Endothelial cell of umbilical vein (primary cell): ENCODE measurements at regions of chr19 and their contacts with region 1.

Region 1: DNA sequence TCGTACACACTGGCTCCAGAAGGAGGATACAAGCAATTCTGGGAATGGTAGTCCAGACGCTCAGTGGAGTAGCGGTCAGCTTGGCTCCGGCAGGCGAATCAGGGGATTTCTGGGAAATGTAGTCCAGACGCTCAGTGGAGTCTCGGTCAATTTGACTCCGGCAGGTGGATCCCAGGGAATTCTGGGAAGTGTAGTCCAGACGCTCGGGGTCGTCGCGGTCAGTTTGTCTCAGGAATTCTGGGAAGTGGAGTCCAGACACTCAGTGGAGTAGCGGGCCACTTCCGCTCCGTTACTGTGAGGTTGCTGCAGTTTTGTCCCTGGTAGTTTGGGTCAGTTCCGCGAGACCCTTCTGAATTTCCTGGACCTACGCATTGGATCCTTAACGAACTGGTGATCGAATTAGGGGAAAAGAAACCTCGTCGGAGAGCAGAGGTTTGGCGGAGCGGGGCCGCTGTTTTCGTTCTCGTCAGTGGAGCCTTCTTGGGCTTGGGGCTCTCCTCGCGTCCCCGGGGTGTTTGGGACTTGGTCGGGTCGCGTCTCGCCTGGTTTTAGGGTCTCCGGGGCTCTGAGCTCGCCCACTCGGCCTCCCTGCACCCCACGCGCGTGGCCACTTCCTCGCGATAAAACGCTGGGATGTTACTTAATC is at the start of gene ZNF225:
- DNase-seq: peak; percentile 98
- H3K4me3 ChIP-seq: peak within 1 kb of the TSS; percentile 80 to 94 (median 84)
- H3K27ac ChIP-seq: peak within 1 kb of the TSS; percentile 32
- H3K4me1 ChIP-seq: peaks cover 6% of the 10 kb centered on the region
- H3K27me3 ChIP-seq: no peaks in the 10 kb centered on the region
- CTCF ChIP-seq: no peak
- POLR2A ChIP-seq: peak; percentile 85
- total RNA-seq, gene ZNF225: 3.9 and 4.1 TPM in 2 replicates

Region 2: DNA sequence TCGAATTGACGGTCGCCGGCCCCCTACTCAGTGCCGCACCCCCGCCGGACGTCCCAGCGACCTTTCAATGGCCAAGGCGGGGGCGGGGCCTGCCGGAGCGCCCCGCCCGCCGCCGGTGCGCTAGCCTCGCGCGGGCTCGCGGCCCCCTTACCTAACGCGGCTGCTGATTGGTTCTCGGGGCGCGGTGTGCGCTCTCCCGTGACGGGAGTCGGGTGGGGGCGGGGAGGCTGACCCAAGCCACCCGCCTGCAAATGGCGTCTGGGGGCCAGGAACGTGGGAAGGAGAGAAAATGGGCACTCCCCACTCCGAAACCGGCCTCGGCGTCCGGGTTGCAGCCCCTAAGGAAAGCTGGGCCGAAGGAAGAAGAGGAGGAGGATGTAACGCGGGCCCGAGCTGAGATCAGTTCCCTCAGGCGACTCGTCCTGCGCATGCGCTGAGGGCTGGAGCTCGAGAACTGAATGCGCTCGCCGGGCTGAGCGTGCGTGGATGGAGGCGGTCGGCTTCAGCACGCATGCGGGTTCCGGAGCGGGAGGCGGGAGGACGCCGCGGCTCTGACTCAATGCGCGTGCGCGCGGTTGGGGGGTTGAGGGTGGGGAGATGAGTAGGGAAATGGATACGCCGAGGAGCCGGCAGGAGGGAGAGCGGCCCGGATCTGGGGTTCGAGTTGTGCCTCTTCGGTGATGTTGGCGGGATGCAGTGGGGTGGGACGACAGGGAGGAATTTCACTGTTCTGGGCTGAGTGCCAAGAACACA is 358.6 kb before region 1 on chr19 and contains the start of gene SMG9:
- CTCF ChIA-PET with region 1: no interaction called
- POLR2A ChIA-PET with region 1: no interaction called
- dilution Hi-C with region 1: no loop called
- intact Hi-C with region 1: loop called (anchors 10 kb)
- DNase-seq: peak; percentile 99
- H3K4me3 ChIP-seq: peak within 1 kb of the TSS; percentile 67 to 92 (median 74)
- H3K27ac ChIP-seq: peak within 1 kb of the TSS; percentile 97
- H3K4me1 ChIP-seq: peaks cover 34% of the 10 kb centered on the region
- H3K27me3 ChIP-seq: no peaks in the 10 kb centered on the region
- CTCF ChIP-seq: no peak
- POLR2A ChIP-seq: peak; percentile 50
- total RNA-seq, gene SMG9: 45.0 and 53.3 TPM in 2 replicates

Region 3: DNA sequence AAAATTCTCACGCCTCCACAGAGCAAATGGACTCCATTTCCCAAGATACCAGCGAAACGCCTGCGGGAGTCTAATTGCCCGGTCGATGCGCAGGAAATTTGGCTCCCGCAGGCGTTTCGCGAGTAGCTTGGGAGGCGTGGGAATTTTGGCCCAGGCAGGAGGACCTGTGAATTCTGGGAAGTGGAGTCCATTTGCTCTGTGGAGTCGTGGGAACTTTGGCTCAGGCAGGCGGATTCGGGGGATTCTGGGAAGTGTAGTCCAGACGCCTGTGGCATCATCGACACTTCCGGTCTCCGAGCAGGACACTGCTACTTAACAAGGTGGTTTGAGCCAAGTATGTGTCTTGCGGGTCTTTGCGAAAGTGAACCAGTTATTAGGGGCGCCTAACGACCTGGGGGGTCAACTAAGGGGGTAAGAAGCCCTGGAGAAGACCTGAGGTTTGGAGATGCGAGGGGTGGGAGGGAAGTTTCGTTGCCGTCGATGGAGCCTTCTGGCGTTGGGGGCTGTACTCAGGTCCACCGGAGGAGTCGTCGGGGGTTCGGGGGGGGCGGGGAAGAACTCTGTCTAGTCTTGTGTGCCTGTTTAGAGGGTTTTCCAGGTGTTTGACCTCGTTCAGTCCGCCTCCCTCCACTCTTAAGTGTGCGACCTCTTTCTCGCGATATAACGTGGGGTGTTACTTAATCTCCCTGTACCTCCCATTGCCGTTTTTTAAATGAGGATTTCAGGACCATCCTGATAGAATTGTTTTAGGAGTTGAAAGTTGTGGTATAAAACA is 129.2 kb before region 1 on chr19 and contains the start of gene ZNF155:
- CTCF ChIA-PET with region 1: no interaction called
- POLR2A ChIA-PET with region 1: no interaction called
- dilution Hi-C with region 1: no loop called
- intact Hi-C with region 1: loop called (anchors 1 kb)
- DNase-seq: peak; percentile 95
- H3K4me3 ChIP-seq: peak within 1 kb of the TSS; percentile 32 to 75 (median 68)
- H3K27ac ChIP-seq: peak within 1 kb of the TSS; percentile 23
- H3K4me1 ChIP-seq: peaks cover 6% of the 10 kb centered on the region
- H3K27me3 ChIP-seq: no peaks in the 10 kb centered on the region
- CTCF ChIP-seq: no peak
- POLR2A ChIP-seq: peak; percentile 39
- total RNA-seq, gene ZNF155: 5.9 and 7.6 TPM in 2 replicates

Region 4: GRCh38 chr19:44051654-44052402 is 61.4 kb before region 1 on chr19 and contains the start of gene ZNF223:
- CTCF ChIA-PET with region 1: no interaction called
- POLR2A ChIA-PET with region 1: no interaction called
- dilution Hi-C with region 1: no loop called
- intact Hi-C with region 1: loop called (anchors 2 kb)
- DNase-seq: peak; percentile 91
- H3K4me3 ChIP-seq: peak within 1 kb of the TSS; percentile 48 to 64 (median 61)
- H3K27ac ChIP-seq: no peak within 1 kb of the TSS
- H3K4me1 ChIP-seq: peaks cover 11% of the 10 kb centered on the region
- H3K27me3 ChIP-seq: peaks cover 4 to 9% of the 10 kb centered on the region in 2 experiments
- CTCF ChIP-seq: no peak
- POLR2A ChIP-seq: peak; percentile 53
- total RNA-seq, gene ZNF223: 3.4 and 3.7 TPM in 2 replicates

Region 5: DNA sequence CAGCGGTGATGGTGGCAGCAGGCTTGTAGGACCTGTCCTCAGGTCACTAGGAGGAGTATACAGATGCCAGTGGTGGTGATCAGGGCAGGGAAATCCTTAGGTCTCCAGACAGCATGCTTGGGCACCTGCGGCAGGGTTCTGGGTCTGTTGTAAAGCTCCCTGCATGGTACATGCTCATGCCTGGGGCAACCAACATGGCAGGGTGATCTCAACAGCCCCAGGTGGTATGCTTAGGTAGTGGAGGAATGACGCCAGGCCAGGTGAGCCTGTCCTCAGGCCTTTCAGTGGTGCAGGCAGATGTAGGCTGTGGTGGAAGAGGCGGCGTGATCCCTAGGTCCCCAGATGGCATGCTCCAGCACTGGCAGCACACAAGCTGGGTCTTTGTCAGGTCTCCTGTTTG is 29.4 kb before region 1 on chr19:
- CTCF ChIA-PET with region 1: no interaction called
- POLR2A ChIA-PET with region 1: no interaction called
- dilution Hi-C with region 1: no loop called
- intact Hi-C with region 1: no loop called
- DNase-seq: no peak
- H3K4me3 ChIP-seq: no peak overlapping the region
- H3K27ac ChIP-seq: no peak overlapping the region
- H3K4me1 ChIP-seq: no peaks in the 10 kb centered on the region
- H3K27me3 ChIP-seq: no peaks in the 10 kb centered on the region
- CTCF ChIP-seq: no peak
- POLR2A ChIP-seq: no peak

Region 6: DNA sequence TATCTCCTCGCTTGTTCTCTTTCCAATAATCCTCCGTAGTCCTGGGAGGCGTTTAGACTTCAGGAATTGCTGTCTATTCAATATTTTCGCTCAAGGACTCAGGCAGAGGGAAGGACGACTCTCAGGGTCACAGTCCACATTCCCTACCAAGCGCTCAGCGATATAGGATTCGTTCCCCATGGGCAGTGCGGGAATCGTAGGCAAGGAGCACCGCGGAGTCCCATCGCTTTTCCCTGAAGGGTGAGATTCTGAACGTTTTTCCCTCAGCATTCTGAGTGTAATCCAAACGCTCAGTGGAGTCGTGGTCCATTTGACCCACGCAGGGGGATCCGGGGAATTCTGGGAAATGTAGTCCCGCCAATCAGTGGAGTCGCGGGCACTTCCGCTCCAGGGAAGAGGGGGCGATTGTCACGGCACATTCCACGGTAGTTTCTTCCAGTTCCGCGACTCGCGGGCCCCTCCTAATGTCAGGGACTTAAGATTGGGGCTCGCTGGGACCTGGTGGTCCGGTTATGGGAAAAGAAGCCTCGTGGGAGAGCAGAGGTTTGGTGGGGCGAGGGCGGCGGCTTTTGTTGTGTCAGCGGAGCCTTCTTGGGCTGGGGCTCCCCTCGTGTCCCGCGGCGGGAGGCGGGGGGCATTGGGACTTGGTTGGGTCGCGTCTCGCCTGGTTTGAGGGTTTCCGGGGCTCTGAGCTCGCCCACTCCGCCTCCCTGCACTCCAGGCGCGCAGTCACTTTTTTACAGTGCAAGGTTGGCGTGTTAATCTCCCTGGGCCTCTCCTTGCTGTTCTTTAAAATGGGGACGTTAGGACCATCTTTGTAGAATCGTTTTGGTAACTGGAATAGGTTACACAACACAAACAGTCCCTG is 28.2 kb after region 1 on chr19 and contains the start of gene ZNF234:
- CTCF ChIA-PET with region 1: no interaction called
- POLR2A ChIA-PET with region 1: no interaction called
- dilution Hi-C with region 1: no loop called
- intact Hi-C with region 1: loop called (anchors 2 kb)
- DNase-seq: peak; percentile 83
- H3K4me3 ChIP-seq: peak within 1 kb of the TSS; percentile 64 to 71 (median 67)
- H3K27ac ChIP-seq: peak within 1 kb of the TSS; percentile 14
- H3K4me1 ChIP-seq: peaks cover 6% of the 10 kb centered on the region
- H3K27me3 ChIP-seq: no peaks in the 10 kb centered on the region
- CTCF ChIP-seq: no peak
- POLR2A ChIP-seq: peak; percentile 59
- total RNA-seq, gene ZNF234: 10.6 and 11.9 TPM in 2 replicates

Region 7: DNA sequence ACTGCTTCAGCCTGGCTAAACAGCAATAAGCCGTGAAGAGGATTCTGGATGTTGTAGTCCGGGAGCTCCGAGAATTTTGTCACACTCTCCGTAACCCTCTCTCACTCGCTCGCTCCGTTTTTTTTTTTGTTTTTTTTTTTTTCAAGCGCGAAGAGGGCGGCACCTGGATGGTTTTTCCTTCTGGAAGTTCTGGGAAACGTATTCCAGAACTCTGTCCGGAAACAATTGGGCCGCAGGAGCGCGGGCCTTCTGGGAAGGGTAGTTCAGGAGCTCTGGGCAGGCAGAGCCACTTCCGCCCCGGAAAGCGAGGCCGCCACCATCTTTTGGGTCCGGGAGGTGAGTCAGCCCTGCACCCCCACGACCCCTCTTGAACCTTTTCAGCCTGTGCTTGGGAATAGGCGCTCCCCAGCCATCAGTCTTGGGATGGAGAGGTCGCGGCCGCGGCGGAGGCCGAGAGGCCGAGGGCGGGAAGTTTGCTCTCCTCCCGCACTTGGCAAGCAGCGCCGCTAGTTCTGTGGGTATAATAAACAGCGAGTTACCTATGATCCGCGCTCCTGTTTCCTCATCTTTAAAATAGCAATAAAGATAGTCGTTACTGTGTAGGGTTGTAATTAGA is 99.1 kb after region 1 on chr19 and contains the start of gene ZNF227:
- CTCF ChIA-PET with region 1: no interaction called
- POLR2A ChIA-PET with region 1: no interaction called
- dilution Hi-C with region 1: no loop called
- intact Hi-C with region 1: loop called (anchors 1 kb)
- DNase-seq: peak; percentile 97
- H3K4me3 ChIP-seq: peak within 1 kb of the TSS; percentile 82 to 99 (median 98)
- H3K27ac ChIP-seq: peak within 1 kb of the TSS; percentile 71
- H3K4me1 ChIP-seq: peaks cover 11% of the 10 kb centered on the region
- H3K27me3 ChIP-seq: no peaks in the 10 kb centered on the region
- CTCF ChIP-seq: no peak
- POLR2A ChIP-seq: peak; percentile 65
- total RNA-seq, gene ZNF227: 17.2 and 17.8 TPM in 2 replicates

Region 8: GRCh38 chr19:44500148-44500956 is 387.1 kb after region 1 on chr19 and contains the start of gene ZNF180:
- CTCF ChIA-PET with region 1: no interaction called
- POLR2A ChIA-PET with region 1: no interaction called
- dilution Hi-C with region 1: no loop called
- intact Hi-C with region 1: loop called (anchors 1 kb)
- DNase-seq: peak; percentile 96
- H3K4me3 ChIP-seq: peak within 1 kb of the TSS; percentile 75 to 88 (median 77)
- H3K27ac ChIP-seq: peak within 1 kb of the TSS; percentile 59
- H3K4me1 ChIP-seq: peaks cover 11% of the 10 kb centered on the region
- H3K27me3 ChIP-seq: peaks cover 0 to 2% of the 10 kb centered on the region in 2 experiments
- CTCF ChIP-seq: peak; percentile 14 to 53
- POLR2A ChIP-seq: peak; percentile 77
- total RNA-seq, gene ZNF180: 8.6 and 8.9 TPM in 2 replicates